Heart left ventricle (tissue), 16 donors: ENCODE measurements at regions of chr9 and their contacts with region 1.

Region 1: GRCh38 chr9:2727966-2728613 is 10.8 kb downstream of the KCNV2 start:
- DNase-seq: peak in 4 of 5 donors; percentile 32 to 45 (median 42)
- ATAC-seq: peak; percentile 67 to 83 (median 82)
- H3K4me3 ChIP-seq: no peak overlapping the region
- H3K27ac ChIP-seq: peak overlapping the region in 2 of 12 donors; percentile 8 to 9
- H3K4me1 ChIP-seq: peaks cover 0 to 23% (median 8%) of the 10 kb centered on the region in 12 donors
- H3K27me3 ChIP-seq: no peaks in the 10 kb centered on the region
- CTCF ChIP-seq: peak; percentile 45 to 80 (median 67)
- POLR2A ChIP-seq: no peak

Region 2: DNA sequence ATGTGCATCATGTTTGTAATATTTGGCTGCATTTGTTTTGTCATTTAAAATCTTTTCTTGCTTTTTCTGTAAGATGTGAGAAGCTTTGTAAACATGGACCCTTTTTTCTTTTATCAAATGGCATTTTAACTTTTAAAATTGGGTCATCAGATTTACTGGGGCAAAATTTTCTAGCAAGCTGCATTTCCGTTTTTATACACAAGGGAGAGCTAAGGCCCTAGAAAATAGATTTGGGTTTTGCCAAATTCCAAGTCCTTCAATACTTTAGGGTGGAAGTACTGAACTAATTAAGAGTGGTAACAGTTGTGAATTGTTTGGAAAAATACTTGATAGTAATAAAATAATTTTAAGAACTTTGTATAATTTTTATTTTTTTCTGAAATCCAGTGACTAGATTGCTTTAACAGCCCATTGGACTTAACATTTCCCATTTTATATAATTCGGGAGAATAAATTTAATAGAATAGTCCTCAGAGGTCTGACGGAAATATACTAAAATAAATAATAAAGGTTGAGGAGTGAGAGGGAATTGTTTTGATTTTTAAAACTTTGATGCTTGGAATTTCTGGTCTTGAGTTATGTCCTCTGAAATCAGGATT is 595.5 kb before region 1 on chr9:
- intact Hi-C with region 1: loop called in 8 of 10 experiments (anchors 5 to 10 kb)
- DNase-seq: no peak
- ATAC-seq: peak in 1 of 4 donors; percentile 51
- H3K4me3 ChIP-seq: no peak overlapping the region
- H3K27ac ChIP-seq: no peak overlapping the region
- H3K4me1 ChIP-seq: peaks cover 0 to 64% (median 34%) of the 10 kb centered on the region in 12 donors
- H3K27me3 ChIP-seq: no peaks in the 10 kb centered on the region
- CTCF ChIP-seq: peak; percentile 50 to 85 (median 78)
- POLR2A ChIP-seq: no peak

Region 3: GRCh38 chr9:2321523-2322151 is 406.5 kb before region 1 on chr9:
- intact Hi-C with region 1: loop called in 2 of 10 experiments (anchors 5 to 10 kb)
- DNase-seq: no peak
- ATAC-seq: peak in 1 of 4 donors; percentile 34
- H3K4me3 ChIP-seq: no peak overlapping the region
- H3K27ac ChIP-seq: no peak overlapping the region
- H3K4me1 ChIP-seq: no peaks in the 10 kb centered on the region
- H3K27me3 ChIP-seq: no peaks in the 10 kb centered on the region
- CTCF ChIP-seq: peak in 9 of 12 donors; percentile 12 to 44 (median 34)
- POLR2A ChIP-seq: no peak

Region 4: DNA sequence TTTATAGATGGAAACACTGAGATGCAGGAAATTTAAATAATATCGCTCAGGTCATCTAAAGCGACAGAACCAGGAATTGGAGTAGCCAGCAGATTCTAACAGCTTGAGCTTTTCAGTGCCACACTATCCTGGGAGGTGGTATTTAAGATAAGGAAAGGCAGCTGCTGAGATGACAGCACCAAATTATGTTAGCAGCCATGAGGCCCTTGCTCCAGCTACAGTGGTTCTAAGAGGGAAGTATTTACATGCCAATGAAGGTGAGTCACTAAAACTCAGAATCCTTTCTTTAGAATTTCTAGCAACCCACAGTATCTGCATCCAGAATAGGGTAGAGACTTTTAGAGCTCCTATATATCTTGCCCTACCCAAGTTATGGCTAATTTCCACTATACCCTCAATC is 233.5 kb before region 1 on chr9:
- intact Hi-C with region 1: loop called in 2 of 10 experiments (anchors 5 to 10 kb)
- DNase-seq: no peak
- ATAC-seq: peak in 2 of 4 donors; percentile 40 to 50
- H3K4me3 ChIP-seq: no peak overlapping the region
- H3K27ac ChIP-seq: peak overlapping the region in 9 of 12 donors; percentile 14 to 78 (median 67)
- H3K4me1 ChIP-seq: peaks cover 3 to 64% (median 23%) of the 10 kb centered on the region in 12 donors
- H3K27me3 ChIP-seq: no peaks in the 10 kb centered on the region
- CTCF ChIP-seq: no peak
- POLR2A ChIP-seq: no peak

Region 5: DNA sequence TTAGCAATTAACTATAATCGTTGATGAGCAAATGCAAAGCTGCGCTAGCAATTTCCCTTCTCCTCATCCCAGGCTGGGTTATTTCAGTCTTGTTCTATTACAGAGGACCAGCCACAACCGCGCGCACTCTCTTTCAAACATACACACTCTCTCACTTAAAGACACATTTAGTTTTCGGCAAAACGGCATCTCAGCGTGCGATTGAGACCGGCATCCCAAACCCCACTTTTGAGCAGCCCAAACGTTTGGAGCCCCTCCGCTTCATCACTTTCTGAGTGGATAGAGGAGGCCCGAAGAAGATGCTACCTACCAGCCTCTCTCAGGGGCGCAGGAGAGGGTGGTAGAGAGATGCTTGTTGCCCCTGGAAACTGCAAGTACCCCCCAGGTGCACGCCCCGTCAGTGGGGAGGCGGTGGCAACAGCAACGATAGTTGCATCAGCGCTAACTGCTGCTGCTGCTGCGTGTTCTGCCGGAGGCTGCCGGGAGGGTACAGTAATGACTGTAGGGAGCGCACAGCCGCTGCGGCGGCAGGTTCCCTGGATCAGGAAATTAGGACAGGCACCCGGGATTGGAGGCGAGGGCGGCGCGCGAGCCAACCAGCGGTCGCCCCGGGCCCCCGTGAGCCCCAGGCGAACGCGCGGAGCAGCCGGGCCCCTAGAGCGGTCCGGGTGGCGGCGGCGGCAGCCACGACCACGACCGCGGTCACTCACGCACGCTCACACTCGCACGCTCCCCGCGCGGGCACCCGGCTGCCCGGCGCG is 107.0 kb before region 1 on chr9:
- intact Hi-C with region 1: loop called in 4 of 10 experiments (anchors 2 to 10 kb)
- DNase-seq: peak; percentile 76 to 90 (median 89)
- ATAC-seq: peak; percentile 74 to 82 (median 82)
- H3K4me3 ChIP-seq: peak overlapping the region; percentile 70 to 94 (median 86)
- H3K27ac ChIP-seq: peak overlapping the region; percentile 55 to 98 (median 94)
- H3K4me1 ChIP-seq: peaks cover 0 to 38% (median 23%) of the 10 kb centered on the region in 12 donors
- H3K27me3 ChIP-seq: peaks cover 0 to 44% (median 0%) of the 10 kb centered on the region in 9 donors
- CTCF ChIP-seq: peak in 6 of 12 donors; percentile 12 to 40 (median 21)
- POLR2A ChIP-seq: peak in 1 of 2 donors; percentile 64

Region 6: DNA sequence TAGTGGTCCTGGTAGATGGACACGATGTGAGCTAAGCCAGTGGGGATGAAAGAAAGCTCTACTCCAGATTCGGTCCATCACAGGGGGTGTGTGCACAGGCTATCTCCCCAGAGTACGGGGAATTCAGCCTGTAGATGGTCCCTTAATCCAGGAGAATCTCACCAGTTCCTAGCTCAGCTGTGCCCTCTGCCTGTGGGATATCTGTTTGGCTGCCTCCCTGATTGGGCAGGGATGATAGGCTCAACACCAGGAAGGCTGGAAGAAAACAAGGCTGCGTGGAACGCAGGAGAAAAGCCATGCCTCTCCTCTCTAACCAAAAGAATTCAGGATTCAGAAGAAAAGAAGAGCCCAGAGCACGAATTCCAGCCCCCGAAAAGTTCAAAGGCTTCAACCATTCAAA is 65.6 kb before region 1 on chr9:
- intact Hi-C with region 1: loop called in 3 of 10 experiments (anchors 5 to 10 kb)
- DNase-seq: no peak
- ATAC-seq: peak in 2 of 4 donors; percentile 13 to 16
- H3K4me3 ChIP-seq: no peak overlapping the region
- H3K27ac ChIP-seq: peak overlapping the region in 10 of 12 donors; percentile 58 to 88 (median 74)
- H3K4me1 ChIP-seq: peaks cover 0 to 44% (median 24%) of the 10 kb centered on the region in 12 donors
- H3K27me3 ChIP-seq: no peaks in the 10 kb centered on the region
- CTCF ChIP-seq: peak in 2 of 12 donors; percentile 14 to 25
- POLR2A ChIP-seq: no peak

Region 7: GRCh38 chr9:2839040-2839439 is 111.0 kb after region 1 on chr9:
- intact Hi-C with region 1: no loop called
- DNase-seq: no peak
- ATAC-seq: no peak
- H3K4me3 ChIP-seq: peak overlapping the region in 8 of 12 donors; percentile 29 to 52 (median 39)
- H3K27ac ChIP-seq: peak overlapping the region in 8 of 12 donors; percentile 0 to 73 (median 34)
- H3K4me1 ChIP-seq: peaks cover 3 to 59% (median 46%) of the 10 kb centered on the region in 12 donors
- H3K27me3 ChIP-seq: no peaks in the 10 kb centered on the region
- CTCF ChIP-seq: no peak
- POLR2A ChIP-seq: no peak

Region 8: GRCh38 chr9:2933165-2934095 is 205.3 kb after region 1 on chr9:
- intact Hi-C with region 1: no loop called
- DNase-seq: peak in 2 of 5 donors; percentile 18 to 65
- ATAC-seq: no peak
- H3K4me3 ChIP-seq: no peak overlapping the region
- H3K27ac ChIP-seq: no peak overlapping the region
- H3K4me1 ChIP-seq: no peaks in the 10 kb centered on the region
- H3K27me3 ChIP-seq: peaks cover 0 to 3% (median 0%) of the 10 kb centered on the region in 9 donors
- CTCF ChIP-seq: no peak
- POLR2A ChIP-seq: no peak